Heart right ventricle (tissue), 16 donors: ENCODE measurements at regions of chr10 and their contacts with region 1.

Region 1: GRCh38 chr10:43436400-43437140 is at the start of gene ZNF487:
- DNase-seq: peak; percentile 90 to 91
- ATAC-seq: peak; percentile 99
- H3K4me3 ChIP-seq: peak within 1 kb of the TSS; percentile 43 to 99 (median 82)
- H3K27ac ChIP-seq: peak within 1 kb of the TSS; percentile 96 to 100 (median 100)
- H3K4me1 ChIP-seq: peaks cover 0 to 33% (median 10%) of the 10 kb centered on the region in 9 donors
- H3K27me3 ChIP-seq: no peaks in the 10 kb centered on the region
- CTCF ChIP-seq: peak in 6 of 9 donors; percentile 11 to 60 (median 46)
- total RNA-seq, gene ZNF487: 1.6 to 4.2 (median 2.4) TPM

Region 2: DNA sequence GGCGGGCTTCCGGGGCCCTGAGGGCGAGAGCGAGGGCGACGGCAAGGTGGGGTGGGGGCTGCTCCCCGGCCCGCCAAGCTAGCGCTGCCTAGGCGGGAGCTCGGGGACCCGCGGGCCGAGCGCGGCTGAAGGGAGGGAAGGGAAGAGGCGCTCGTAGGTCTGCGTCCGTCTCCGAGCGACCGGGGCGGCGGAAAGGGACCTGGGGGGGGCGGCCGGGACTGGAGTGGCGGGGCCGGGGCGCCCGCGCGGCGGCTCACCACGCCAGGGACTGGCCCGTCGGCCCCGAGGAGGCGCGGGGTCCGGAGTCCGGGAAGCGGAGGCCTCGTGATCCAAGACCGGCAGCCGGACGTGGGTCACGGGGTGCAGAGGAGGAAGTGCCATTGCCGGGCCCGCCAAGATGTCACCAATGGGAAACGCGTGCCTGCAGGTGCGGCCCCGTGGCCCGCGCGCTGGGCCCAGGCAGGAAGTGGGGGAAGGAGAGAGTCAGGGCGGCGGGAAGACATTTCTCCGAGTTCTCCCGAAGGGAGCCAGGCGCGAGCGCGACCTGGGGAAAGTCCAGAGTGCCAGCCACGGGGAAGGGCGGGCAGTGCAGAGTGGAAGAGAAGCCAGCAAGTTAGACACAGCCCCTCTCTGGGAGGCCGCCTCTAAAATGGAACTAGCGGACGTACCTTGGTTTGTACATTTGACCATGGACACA is 39.5 kb before region 1 on chr10:
- intact Hi-C with region 1: loop called in 4 of 10 experiments (anchors 2 to 5 kb)
- DNase-seq: peak; percentile 88 to 91
- ATAC-seq: peak; percentile 90 to 93 (median 91)
- H3K4me3 ChIP-seq: peak overlapping the region; percentile 48 to 85 (median 74)
- H3K27ac ChIP-seq: peak overlapping the region; percentile 94 to 99 (median 98)
- H3K4me1 ChIP-seq: peaks cover 9 to 85% (median 62%) of the 10 kb centered on the region in 9 donors
- H3K27me3 ChIP-seq: no peaks in the 10 kb centered on the region
- CTCF ChIP-seq: no peak

Region 3: DNA sequence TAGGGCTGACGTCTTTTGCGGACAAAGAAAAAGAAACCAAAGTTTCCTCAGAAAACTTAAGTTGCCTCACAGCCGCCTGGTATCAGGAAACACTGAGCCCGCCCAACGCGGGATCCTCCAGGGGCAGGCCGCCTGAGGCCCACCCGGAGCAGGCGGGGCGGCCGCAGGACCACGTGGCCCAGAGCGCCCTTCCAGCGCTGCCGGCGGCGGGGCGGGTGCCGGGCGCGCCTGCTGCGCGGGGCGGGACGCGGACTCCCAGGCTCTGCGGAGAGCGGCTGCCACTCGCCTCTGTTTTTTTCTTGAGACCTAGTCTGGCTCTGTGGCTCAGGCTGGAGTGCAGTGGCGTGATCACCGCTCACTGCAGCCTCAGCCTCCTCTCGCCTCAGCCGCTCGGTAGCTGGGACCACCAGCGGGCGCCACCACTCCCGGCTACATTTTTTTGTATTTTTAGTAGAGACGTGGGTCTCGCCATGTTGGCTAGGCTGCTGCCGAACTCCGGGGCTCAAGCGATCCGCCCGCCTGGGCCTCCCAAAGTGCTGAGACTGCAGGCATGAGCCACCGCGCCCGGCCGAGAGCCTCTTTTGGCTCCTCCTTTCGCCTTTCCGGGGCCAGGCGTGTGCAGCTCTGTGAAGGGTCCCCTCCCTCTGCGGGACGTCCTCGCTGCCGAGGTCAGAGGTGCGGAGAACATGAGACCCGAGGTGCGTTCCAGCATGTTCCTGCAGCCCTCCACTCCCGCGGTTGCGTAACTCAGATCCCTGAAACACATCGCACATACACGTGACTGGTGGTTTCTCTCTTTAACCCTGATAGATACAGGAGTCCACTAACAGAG is 16.0 kb before region 1 on chr10:
- intact Hi-C with region 1: loop called in 4 of 10 experiments (anchors 1 to 2 kb)
- DNase-seq: peak; percentile 86 to 89
- ATAC-seq: peak; percentile 97 to 100 (median 98)
- H3K4me3 ChIP-seq: peak overlapping the region; percentile 41 to 75 (median 66)
- H3K27ac ChIP-seq: peak overlapping the region; percentile 94 to 100 (median 99)
- H3K4me1 ChIP-seq: peaks cover 0 to 41% (median 12%) of the 10 kb centered on the region in 9 donors
- H3K27me3 ChIP-seq: no peaks in the 10 kb centered on the region
- CTCF ChIP-seq: peak in 6 of 9 donors; percentile 20 to 55 (median 28)